SK-N-SH (cell line): ENCODE measurements at regions of chr12 and their contacts with region 1.

Region 1: GRCh38 chr12:50986966-50987737 is 34.8 kb downstream of the HIGD1C start:
- DNase-seq: peak; percentile 44
- H3K4me3 ChIP-seq: no peak overlapping the region
- H3K27ac ChIP-seq: no peak overlapping the region
- H3K4me1 ChIP-seq: peaks cover 2 to 11% of the 10 kb centered on the region in 2 experiments; a peak in 1 of 4 replicates
- H3K27me3 ChIP-seq: no peaks in the 10 kb centered on the region
- CTCF ChIP-seq: peak; percentile 68
- EP300 ChIP-seq: no peak
- RAD21 ChIP-seq: peak; percentile 89

Region 2: GRCh38 chr12:50763639-50764285 is 223.4 kb before region 1 on chr12 and contains the start of gene ATF1:
- CTCF ChIA-PET with region 1: interaction called, 32 read pairs
- POLR2A ChIA-PET with region 1: interaction called, 4 read pairs
- DNase-seq: peak; percentile 95
- H3K4me3 ChIP-seq: peak within 1 kb of the TSS; percentile 71 to 73
- H3K27ac ChIP-seq: peak within 1 kb of the TSS; percentile 91 to 93
- H3K4me1 ChIP-seq: peaks cover 8 to 9% of the 10 kb centered on the region in 2 experiments; a peak in 1 of 4 replicates
- H3K27me3 ChIP-seq: no peaks in the 10 kb centered on the region
- CTCF ChIP-seq: no peak
- EP300 ChIP-seq: no peak
- RAD21 ChIP-seq: no peak
- polyA plus RNA-seq, gene ATF1: 25.0 and 34.2 TPM in 2 replicates

Region 3: DNA sequence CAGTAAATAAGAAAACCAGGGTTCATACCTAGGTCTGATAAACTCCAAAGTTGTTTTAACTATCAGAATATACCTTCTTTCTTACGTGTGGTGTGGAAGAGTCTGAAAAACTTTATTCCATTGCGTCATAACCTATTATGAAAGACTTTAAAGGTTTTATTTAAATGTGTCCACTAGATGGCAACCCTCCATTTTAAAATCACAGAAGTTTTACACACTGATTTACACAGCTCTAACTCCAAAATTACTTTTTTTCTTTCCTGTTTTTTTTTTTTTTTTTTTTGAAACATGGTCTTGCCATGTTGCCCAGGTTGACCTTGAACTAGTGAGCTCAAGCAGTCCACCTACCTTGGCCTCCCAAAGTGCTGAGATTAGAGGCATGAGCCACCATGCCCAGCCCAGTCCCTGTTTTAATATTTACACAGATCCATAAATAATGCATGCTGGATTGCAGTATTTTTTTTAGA is 161.7 kb before region 1 on chr12:
- CTCF ChIA-PET with region 1: interaction called, 186 read pairs
- POLR2A ChIA-PET with region 1: no interaction called
- DNase-seq: peak; percentile 36
- H3K4me3 ChIP-seq: no peak overlapping the region
- H3K27ac ChIP-seq: peak overlapping the region in 1 of 2 experiments; percentile 18; a peak in 1 of 4 replicates
- H3K4me1 ChIP-seq: no peaks in the 10 kb centered on the region; a peak in 1 of 4 replicates
- H3K27me3 ChIP-seq: no peaks in the 10 kb centered on the region
- CTCF ChIP-seq: peak; percentile 68
- EP300 ChIP-seq: no peak
- RAD21 ChIP-seq: peak; percentile 79

Region 4: GRCh38 chr12:50924439-50925341 is 62.5 kb before region 1 on chr12:
- CTCF ChIA-PET with region 1: interaction called, 17 read pairs
- POLR2A ChIA-PET with region 1: no interaction called
- DNase-seq: peak; percentile 65
- H3K4me3 ChIP-seq: peak overlapping the region; percentile 59 to 60
- H3K27ac ChIP-seq: peak overlapping the region; percentile 71 to 96; a peak in 3 of 4 replicates
- H3K4me1 ChIP-seq: peaks cover 11 to 31% of the 10 kb centered on the region in 2 experiments
- H3K27me3 ChIP-seq: no peaks in the 10 kb centered on the region
- CTCF ChIP-seq: no peak
- EP300 ChIP-seq: peak in 1 of 2 experiments; percentile 40; a peak in 2 of 4 replicates
- RAD21 ChIP-seq: no peak

Region 5: GRCh38 chr12:50971946-50972345 is 15.2 kb before region 1 on chr12:
- CTCF ChIA-PET with region 1: interaction called, 10 read pairs
- POLR2A ChIA-PET with region 1: no interaction called
- DNase-seq: no peak
- H3K4me3 ChIP-seq: no peak overlapping the region
- H3K27ac ChIP-seq: no peak overlapping the region
- H3K4me1 ChIP-seq: no peaks in the 10 kb centered on the region
- H3K27me3 ChIP-seq: no peaks in the 10 kb centered on the region
- CTCF ChIP-seq: no peak
- EP300 ChIP-seq: no peak
- RAD21 ChIP-seq: no peak

Region 6: DNA sequence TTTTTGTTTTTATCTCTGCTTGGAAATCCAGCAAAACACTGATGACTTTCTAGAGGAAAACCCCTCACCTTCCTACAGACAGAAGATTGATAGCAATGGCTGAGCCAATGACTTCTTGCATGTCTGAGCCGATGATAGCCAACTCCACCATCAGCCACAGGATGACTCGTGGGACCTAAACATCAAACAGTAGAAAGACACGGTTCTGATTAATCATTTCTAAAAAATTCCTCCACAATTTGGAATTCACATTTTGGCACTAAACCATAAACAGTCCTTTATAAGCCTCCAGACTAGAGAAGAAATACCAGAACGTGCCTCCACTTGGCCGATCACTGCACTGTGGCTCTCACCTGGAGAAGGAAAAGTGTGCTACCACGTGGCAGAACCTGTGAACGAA is 13.1 kb after region 1 on chr12:
- CTCF ChIA-PET with region 1: interaction called, 15 read pairs
- POLR2A ChIA-PET with region 1: no interaction called
- DNase-seq: no peak
- H3K4me3 ChIP-seq: no peak overlapping the region
- H3K27ac ChIP-seq: no peak overlapping the region
- H3K4me1 ChIP-seq: no peaks in the 10 kb centered on the region
- H3K27me3 ChIP-seq: no peaks in the 10 kb centered on the region
- CTCF ChIP-seq: no peak
- EP300 ChIP-seq: no peak
- RAD21 ChIP-seq: no peak

Region 7: DNA sequence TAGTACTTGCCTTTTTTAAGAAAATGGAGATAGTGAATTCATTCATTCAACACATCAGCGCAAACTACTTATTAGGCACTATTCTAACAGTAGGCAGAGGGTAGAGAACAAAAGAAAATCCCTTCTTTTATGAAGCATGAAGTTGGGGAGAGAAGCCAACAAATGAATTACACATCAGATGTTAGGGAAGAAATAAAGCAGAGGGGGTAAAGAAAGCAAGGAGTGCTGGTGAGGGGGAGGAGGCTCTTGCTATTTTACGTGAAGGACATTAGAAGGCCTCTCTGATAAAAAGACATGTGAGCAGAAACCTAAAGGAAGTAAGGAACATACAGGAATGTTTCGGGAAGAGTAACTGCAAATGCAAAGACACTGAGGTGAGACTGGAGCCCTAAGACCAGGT is 163.6 kb after region 1 on chr12:
- CTCF ChIA-PET with region 1: no interaction called
- POLR2A ChIA-PET with region 1: no interaction called
- DNase-seq: no peak
- H3K4me3 ChIP-seq: no peak overlapping the region
- H3K27ac ChIP-seq: no peak overlapping the region
- H3K4me1 ChIP-seq: no peaks in the 10 kb centered on the region
- H3K27me3 ChIP-seq: no peaks in the 10 kb centered on the region
- CTCF ChIP-seq: no peak
- EP300 ChIP-seq: no peak
- RAD21 ChIP-seq: no peak